Heart right ventricle (tissue), 16 donors: ENCODE measurements at regions of chr2 and their contacts with region 1.

Region 1: GRCh38 chr2:169573160-169573973 is at the start of gene FASTKD1:
- DNase-seq: peak; percentile 90 to 93
- ATAC-seq: peak; percentile 97 to 100 (median 99)
- H3K4me3 ChIP-seq: peak within 1 kb of the TSS; percentile 62 to 89 (median 74)
- H3K27ac ChIP-seq: peak within 1 kb of the TSS; percentile 41 to 92 (median 86)
- H3K4me1 ChIP-seq: peaks cover 0 to 34% (median 25%) of the 10 kb centered on the region in 9 donors
- H3K27me3 ChIP-seq: no peaks in the 10 kb centered on the region
- CTCF ChIP-seq: no peak
- total RNA-seq, gene FASTKD1: 42.4 to 101 (median 88.5) TPM

Region 2: DNA sequence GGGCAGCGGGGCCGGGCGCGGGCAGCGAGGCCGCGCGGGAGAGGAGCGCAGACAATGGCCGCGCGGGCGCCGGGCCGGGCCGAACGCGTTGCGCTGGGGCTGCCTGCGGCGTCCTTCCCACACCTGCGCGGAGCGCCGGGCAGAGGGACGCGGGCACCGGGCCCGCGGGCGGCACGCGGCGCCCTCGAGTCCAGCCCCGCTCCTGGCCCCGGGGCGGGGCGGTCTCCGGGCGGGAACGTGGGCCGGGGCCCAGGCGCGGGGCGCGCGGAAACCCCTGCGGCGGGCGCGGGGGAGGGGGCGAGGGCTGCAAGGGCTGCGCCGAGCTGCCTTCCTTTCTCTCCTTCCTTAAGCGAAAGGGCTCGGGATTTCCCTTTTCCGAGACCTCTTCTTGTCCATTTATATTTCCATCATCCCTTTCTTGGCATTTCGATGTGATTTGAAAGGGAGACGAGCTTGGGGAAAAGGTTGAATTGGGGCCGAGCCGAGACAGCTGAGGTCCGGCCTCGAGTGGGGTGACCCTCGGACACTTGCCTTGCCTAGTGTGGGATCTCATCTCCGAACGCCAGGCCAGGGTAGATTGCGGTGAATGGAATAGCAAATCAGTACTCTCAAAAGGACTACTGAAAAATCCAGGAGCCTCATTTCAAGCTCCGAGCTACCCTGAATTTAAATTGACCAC is 160.9 kb after region 1 on chr2:
- intact Hi-C with region 1: loop called in 1 of 10 experiments (anchors 10 kb)
- DNase-seq: peak in 1 of 2 donors; percentile 23
- ATAC-seq: peak in 5 of 8 donors; percentile 8 to 38 (median 24)
- H3K4me3 ChIP-seq: peak overlapping the region; percentile 30 to 73 (median 68)
- H3K27ac ChIP-seq: peak overlapping the region in 7 of 10 donors; percentile 18 to 65 (median 60)
- H3K4me1 ChIP-seq: peaks cover 0 to 14% (median 0%) of the 10 kb centered on the region in 9 donors
- H3K27me3 ChIP-seq: peaks cover 0 to 13% (median 0%) of the 10 kb centered on the region in 7 donors
- CTCF ChIP-seq: no peak